ENCODE measurements at regions of chr20 and their contacts with region 1.

Region 1: DNA sequence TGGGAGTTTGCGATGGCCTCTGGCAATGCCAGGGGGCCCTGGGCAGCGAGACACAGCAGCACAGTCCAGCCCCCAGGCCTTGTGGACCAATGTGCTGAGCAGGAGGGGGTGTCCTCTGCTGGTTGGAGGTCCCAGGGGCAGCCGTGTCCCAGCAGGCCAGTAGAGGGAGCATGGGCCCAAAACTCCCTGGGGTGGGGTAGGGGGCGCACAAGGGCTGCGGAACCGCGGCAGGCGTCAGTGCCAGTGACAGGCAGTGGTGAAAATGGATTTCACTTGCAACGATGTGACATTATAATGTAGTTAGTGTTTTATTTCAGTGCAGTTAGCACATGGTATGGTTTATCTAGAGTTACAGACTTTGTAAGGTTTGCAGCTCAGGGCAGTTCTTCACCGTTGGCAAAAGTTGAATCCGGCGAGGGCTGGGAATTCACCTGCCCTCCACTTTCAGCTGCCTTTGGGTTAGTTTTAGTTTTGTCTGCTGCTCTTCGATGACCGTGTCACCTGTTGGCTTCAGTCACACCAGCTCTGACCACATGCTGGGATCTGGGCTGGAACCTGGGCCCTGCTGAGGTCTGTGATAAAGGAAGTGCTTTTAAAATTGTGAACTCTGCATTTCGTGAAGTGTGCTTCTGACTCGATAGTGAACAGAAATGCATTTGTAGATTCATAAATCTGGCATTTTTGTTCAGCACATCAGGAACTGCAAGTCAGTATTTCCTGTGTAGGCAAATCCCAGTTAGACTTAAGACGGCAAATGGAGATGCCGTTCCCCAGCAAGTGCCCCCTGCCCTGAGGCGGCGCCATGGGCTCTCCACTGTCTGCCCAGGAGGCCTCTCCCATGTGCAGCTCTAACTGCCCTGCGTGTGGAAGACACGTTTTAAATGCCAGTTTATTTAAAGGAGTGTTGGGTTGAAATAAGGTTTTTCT is 46.8 kb downstream of the PYGB start:
- DNase-seq: peak in 2 of 3 donors; percentile 82 to 84
- ATAC-seq: peak; percentile 37 to 61
- H3K4me3 ChIP-seq: no peak overlapping the region
- H3K27ac ChIP-seq: peak overlapping the region; percentile 55
- H3K4me1 ChIP-seq: peaks cover 5% of the 10 kb centered on the region
- H3K27me3 ChIP-seq: no peaks in the 10 kb centered on the region

Region 2: DNA sequence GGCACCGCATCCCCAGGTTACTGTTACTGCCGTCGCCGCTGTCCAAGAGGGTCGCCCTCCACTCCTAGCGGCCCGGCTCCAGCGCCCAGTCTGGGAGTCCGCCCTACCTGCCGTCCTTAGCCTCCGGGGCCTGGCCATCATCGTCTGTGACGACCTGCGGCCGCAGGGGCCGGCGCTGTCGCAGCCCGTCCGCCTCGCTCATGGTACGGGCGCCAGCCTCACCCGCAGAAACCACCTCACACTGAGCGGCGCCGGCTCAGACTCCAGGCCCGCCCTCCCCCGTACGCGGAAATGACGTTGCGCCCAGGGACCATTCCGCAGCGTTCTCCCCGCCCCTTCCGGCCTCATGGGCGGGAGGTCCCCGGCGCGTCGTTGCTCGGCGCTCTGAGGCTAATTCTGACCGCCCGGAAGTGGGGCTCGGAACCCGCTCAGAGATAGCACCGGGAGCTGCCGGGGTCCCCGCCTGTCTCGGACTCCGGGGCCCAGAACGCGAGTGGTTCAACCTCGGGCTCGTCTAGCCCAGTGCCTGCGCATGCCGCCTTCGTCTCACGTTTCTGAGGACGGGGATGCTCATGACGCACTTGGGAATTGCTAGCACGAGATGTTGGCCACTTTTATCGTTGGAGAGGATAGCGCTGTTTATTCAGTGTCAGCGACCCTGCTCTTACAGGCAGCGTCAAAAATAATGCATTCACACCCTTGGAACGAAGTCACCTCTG is 302.1 kb before region 1 on chr20 and contains the start of gene APMAP:
- intact Hi-C with region 1: no loop called
- DNase-seq: peak; percentile 97 to 99 (median 98)
- ATAC-seq: peak; percentile 97 to 98
- H3K4me3 ChIP-seq: peak within 1 kb of the TSS; percentile 76
- H3K27ac ChIP-seq: peak within 1 kb of the TSS; percentile 98
- H3K4me1 ChIP-seq: no peaks in the 10 kb centered on the region
- H3K27me3 ChIP-seq: no peaks in the 10 kb centered on the region
- total RNA-seq, gene APMAP: 32.8 to 35.1 (median 34.8) TPM

Region 3: GRCh38 chr20:25195014-25195961 is 99.4 kb before region 1 on chr20 and contains the start of gene ENTPD6:
- intact Hi-C with region 1: loop called in 1 of 4 experiments (anchors 10 kb)
- DNase-seq: peak; percentile 94 to 98 (median 97)
- ATAC-seq: peak; percentile 91 to 93
- H3K4me3 ChIP-seq: peak within 1 kb of the TSS; percentile 78
- H3K27ac ChIP-seq: peak within 1 kb of the TSS; percentile 66
- H3K4me1 ChIP-seq: peaks cover 17% of the 10 kb centered on the region
- H3K27me3 ChIP-seq: no peaks in the 10 kb centered on the region
- total RNA-seq, gene ENTPD6: 102 to 132 (median 127) TPM

Region 4: GRCh38 chr20:25223179-25223661 is 71.5 kb before region 1 on chr20:
- intact Hi-C with region 1: loop called in 1 of 4 experiments (anchors 10 kb)
- DNase-seq: peak in 1 of 3 donors; percentile 32
- ATAC-seq: no peak
- H3K4me3 ChIP-seq: no peak overlapping the region
- H3K27ac ChIP-seq: no peak overlapping the region
- H3K4me1 ChIP-seq: peaks cover 21% of the 10 kb centered on the region
- H3K27me3 ChIP-seq: no peaks in the 10 kb centered on the region

Region 5: GRCh38 chr20:25390538-25391528 is 96.1 kb after region 1 on chr20 and contains the start of gene ABHD12:
- intact Hi-C with region 1: loop called in 2 of 4 experiments (anchors 5 to 10 kb)
- DNase-seq: peak; percentile 97 to 99 (median 99)
- ATAC-seq: peak; percentile 99 to 100
- H3K4me3 ChIP-seq: peak within 1 kb of the TSS; percentile 75
- H3K27ac ChIP-seq: peak within 1 kb of the TSS; percentile 85
- H3K4me1 ChIP-seq: no peaks in the 10 kb centered on the region
- H3K27me3 ChIP-seq: no peaks in the 10 kb centered on the region
- total RNA-seq, gene ABHD12: 22.6 to 28.3 (median 26.0) TPM

Region 6: DNA sequence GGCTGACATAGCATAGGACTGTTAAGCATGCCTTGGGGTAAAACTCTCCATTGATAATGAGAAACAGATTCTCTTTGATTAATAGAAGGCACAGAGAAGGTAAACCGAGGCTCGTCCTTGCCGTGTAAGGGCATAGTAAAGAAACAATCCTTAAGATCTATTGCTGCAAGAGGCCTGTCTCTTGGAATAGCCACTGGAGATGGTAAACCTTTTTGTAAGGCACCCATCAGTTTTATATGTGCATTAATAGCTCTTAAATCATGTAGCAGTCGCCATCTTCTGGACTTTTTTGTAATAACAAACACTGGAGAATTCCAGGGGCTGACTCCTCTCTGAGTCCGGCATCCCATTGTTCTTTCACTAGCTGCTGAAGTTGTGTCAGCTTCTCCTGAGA is 104.3 kb after region 1 on chr20:
- intact Hi-C with region 1: loop called in 2 of 4 experiments (anchors 5 to 10 kb)
- DNase-seq: no peak
- ATAC-seq: peak; percentile 81 to 82
- H3K4me3 ChIP-seq: no peak overlapping the region
- H3K27ac ChIP-seq: no peak overlapping the region
- H3K4me1 ChIP-seq: no peaks in the 10 kb centered on the region
- H3K27me3 ChIP-seq: no peaks in the 10 kb centered on the region

Region 7: GRCh38 chr20:25592135-25592852 is 297.6 kb after region 1 on chr20:
- intact Hi-C with region 1: no loop called
- DNase-seq: no peak
- ATAC-seq: no peak
- H3K4me3 ChIP-seq: no peak overlapping the region
- H3K27ac ChIP-seq: no peak overlapping the region
- H3K4me1 ChIP-seq: no peaks in the 10 kb centered on the region
- H3K27me3 ChIP-seq: no peaks in the 10 kb centered on the region

Measured in right cardiac atrium (tissue), 5 donors.